ENCODE measurements at regions of chr11 and their contacts with region 1.

Region 1: DNA sequence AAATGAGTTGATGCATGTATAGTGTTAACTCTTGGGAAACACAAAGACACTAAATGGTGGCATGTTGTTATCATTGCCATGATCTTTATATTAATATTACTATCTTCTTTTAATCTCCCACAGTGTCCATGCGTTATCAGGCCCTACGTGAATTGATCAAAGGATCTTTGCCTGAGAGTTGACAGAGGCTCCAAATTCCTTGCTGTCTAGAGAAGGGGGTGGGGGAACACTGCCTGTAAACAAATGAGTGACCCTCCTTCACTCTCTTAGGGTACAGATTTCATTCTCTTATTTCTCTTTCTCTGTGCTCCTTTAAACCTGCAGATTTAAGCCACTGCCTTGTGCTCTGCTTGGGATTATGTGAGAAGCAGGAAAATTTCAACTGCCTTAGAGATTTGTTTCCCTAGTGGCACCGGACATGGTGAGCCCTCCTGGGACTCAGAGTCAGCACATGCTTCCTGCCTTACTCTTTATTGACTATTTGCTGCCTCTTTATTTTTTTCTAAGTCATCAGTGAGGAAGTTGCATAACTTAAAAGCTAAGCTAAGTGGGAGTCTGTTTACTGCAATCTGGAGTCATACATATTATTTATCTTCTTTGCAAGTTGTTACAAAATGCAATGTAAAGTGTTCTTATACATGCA is 122.9 kb downstream of the MAML2 start:
- DNase-seq: peak; percentile 65 to 67
- H3K4me3 ChIP-seq: no peak overlapping the region
- H3K4me3 Mint-ChIP-seq: peak overlapping the region; percentile 45
- H3K27ac Mint-ChIP-seq: peak overlapping the region; percentile 81
- H3K4me1 ChIP-seq: peaks cover 47% of the 10 kb centered on the region
- H3K4me1 Mint-ChIP-seq: peaks cover 46% of the 10 kb centered on the region
- H3K27me3 ChIP-seq: no peaks in the 10 kb centered on the region
- H3K27me3 Mint-ChIP-seq: no peaks in the 10 kb centered on the region
- CTCF ChIP-seq: no peak

Region 2: DNA sequence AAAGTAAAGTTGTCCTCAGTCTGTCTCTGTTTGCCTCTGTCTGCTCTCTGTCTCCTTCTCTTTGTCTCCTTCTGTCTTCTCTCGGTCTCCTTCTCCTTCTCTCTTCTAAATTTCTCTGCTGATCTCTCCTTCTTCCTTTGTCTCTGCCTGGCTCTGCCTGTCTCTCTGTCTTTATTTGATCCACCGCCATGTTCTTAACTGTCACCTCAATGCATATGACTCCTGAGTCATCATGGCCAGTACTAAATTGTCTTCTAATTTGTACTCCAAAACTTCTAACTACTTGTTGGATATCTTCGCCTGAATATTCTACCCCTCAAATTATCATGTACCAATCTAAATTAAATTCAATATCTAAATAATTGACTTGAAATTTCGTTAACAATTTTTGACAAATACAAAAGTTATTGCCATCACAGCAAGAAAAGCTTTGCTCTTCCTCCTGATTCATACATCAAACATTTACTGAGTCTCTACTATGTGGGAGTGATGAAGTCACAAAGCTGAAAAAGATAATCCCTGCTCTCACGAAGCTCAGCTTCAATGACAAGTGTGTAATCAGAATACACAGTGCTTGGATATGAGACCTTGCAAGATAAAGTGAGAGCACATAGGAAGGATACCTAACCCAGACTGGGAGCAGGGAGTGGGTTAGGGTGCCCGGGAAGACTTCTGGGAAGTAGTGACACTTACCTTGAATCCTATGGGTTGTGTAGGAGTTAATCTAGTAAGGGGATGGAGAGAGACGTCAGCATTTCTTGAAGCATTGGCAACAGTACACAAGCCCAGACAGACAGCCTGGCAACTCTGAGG is 70.2 kb before region 1 on chr11:
- CTCF ChIA-PET with region 1: no interaction called
- POLR2A ChIA-PET with region 1: no interaction called
- intact Hi-C with region 1: loop called (anchors 5 kb)
- DNase-seq: no peak
- H3K4me3 ChIP-seq: no peak overlapping the region
- H3K4me3 Mint-ChIP-seq: no peak overlapping the region
- H3K27ac Mint-ChIP-seq: no peak overlapping the region
- H3K4me1 ChIP-seq: peaks cover 59% of the 10 kb centered on the region
- H3K4me1 Mint-ChIP-seq: peaks cover 35% of the 10 kb centered on the region
- H3K27me3 ChIP-seq: no peaks in the 10 kb centered on the region
- H3K27me3 Mint-ChIP-seq: no peaks in the 10 kb centered on the region
- CTCF ChIP-seq: no peak

Region 3: DNA sequence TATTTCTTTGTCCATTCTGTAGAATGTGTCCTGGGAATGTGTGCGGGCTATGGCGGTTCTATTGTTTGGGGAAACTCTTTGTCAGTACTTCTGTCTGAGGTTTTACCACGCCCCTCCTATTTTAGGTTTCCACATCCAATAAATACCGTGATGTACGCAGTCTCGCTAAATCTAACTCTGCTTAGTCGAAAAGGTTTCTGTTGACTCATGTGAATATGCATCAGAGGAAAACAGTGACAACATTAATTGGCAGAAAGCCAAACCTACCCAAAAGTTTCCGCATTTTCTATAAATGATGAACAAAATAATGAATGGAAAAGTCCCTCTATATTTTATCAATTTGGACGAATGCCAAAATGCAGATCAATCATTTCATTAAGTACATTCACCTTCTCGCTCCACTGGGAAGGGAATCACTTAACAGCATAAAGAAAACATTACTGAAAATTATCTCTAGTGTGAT is 20.5 kb before region 1 on chr11:
- CTCF ChIA-PET with region 1: no interaction called
- POLR2A ChIA-PET with region 1: no interaction called
- intact Hi-C with region 1: loop called (anchors 1 kb)
- DNase-seq: no peak
- H3K4me3 ChIP-seq: no peak overlapping the region
- H3K4me3 Mint-ChIP-seq: no peak overlapping the region
- H3K27ac Mint-ChIP-seq: peak overlapping the region; percentile 90
- H3K4me1 ChIP-seq: peaks cover 30% of the 10 kb centered on the region
- H3K4me1 Mint-ChIP-seq: peaks cover 31% of the 10 kb centered on the region
- H3K27me3 ChIP-seq: no peaks in the 10 kb centered on the region
- H3K27me3 Mint-ChIP-seq: no peaks in the 10 kb centered on the region
- CTCF ChIP-seq: no peak

Region 4: GRCh38 chr11:96237766-96238266 is 17.7 kb after region 1 on chr11:
- CTCF ChIA-PET with region 1: interaction called, 3 read pairs
- POLR2A ChIA-PET with region 1: no interaction called
- intact Hi-C with region 1: loop called (anchors 1 kb)
- DNase-seq: peak in 1 of 2 experiments; percentile 25
- H3K4me3 ChIP-seq: no peak overlapping the region
- H3K4me3 Mint-ChIP-seq: no peak overlapping the region
- H3K27ac Mint-ChIP-seq: no peak overlapping the region
- H3K4me1 ChIP-seq: peaks cover 42% of the 10 kb centered on the region
- H3K4me1 Mint-ChIP-seq: peaks cover 7% of the 10 kb centered on the region
- H3K27me3 ChIP-seq: no peaks in the 10 kb centered on the region
- H3K27me3 Mint-ChIP-seq: no peaks in the 10 kb centered on the region
- CTCF ChIP-seq: no peak

Region 5: DNA sequence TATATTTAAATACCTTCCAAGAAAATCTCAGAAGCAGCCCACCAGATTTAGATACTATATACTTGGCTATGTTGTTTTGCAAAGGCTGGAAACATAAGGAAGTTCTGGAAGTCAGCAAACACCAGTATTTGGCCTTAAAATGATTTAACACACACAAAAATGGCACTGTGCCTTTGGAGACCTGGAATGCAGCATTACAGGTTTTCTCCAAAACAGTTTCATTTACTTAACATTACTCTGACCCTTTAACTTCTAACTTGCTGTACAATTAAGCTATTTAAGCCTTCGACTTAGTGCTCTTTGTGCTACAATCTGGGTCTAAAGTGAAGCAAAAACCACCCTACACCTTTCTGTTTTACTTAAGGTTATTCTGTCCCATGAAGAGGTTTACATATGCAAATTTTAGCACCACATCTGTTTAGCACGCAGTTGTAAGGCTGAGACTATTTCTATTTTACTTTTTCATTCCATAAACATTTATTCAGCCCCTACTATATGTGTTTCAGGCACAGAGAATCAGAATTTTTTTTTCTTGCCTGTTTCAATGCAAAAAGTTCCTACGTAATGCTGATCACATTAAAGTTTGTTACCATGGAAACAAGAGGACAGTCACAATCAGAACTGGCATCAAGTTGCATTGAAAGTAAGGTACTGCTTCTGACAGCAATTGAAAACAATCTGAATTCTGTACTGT is 52.6 kb after region 1 on chr11:
- CTCF ChIA-PET with region 1: interaction called, 3 read pairs
- POLR2A ChIA-PET with region 1: no interaction called
- intact Hi-C with region 1: loop called (anchors 2 kb)
- DNase-seq: peak in 1 of 2 experiments; percentile 77
- H3K4me3 ChIP-seq: peak overlapping the region; percentile 4; the same call in 1 of the 2 replicates
- H3K4me3 Mint-ChIP-seq: peak overlapping the region; percentile 70
- H3K27ac Mint-ChIP-seq: peak overlapping the region; percentile 96
- H3K4me1 ChIP-seq: peaks cover 46% of the 10 kb centered on the region
- H3K4me1 Mint-ChIP-seq: peaks cover 37% of the 10 kb centered on the region
- H3K27me3 ChIP-seq: no peaks in the 10 kb centered on the region
- H3K27me3 Mint-ChIP-seq: no peaks in the 10 kb centered on the region
- CTCF ChIP-seq: no peak

Region 6: DNA sequence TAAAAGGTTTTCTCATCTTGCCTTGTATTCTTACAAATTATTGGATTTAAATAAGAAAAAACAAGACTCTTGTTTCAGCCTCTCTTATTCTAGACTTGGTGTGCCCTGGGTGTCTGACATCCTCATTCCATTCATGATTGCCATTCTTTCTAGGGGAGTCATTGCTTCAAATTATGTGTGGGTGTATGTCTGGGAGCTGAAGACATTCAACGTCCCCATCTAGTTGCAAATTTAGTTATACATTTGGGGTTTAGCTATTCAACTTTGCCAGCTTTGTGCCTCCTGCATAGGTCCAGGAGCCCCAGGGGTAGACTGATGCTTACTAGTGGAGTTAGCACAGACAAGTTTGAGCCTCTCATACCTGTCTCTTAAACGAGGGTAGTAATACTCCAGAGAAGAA is 104.9 kb after region 1 on chr11:
- CTCF ChIA-PET with region 1: no interaction called
- POLR2A ChIA-PET with region 1: interaction called, 10 read pairs
- intact Hi-C with region 1: no loop called
- DNase-seq: peak in 1 of 2 experiments; percentile 52
- H3K4me3 ChIP-seq: no peak overlapping the region
- H3K4me3 Mint-ChIP-seq: peak overlapping the region; percentile 3
- H3K27ac Mint-ChIP-seq: peak overlapping the region; percentile 97
- H3K4me1 ChIP-seq: peaks cover 82% of the 10 kb centered on the region
- H3K4me1 Mint-ChIP-seq: peaks cover 65% of the 10 kb centered on the region
- H3K27me3 ChIP-seq: no peaks in the 10 kb centered on the region
- H3K27me3 Mint-ChIP-seq: no peaks in the 10 kb centered on the region
- CTCF ChIP-seq: no peak